ENCODE measurements at regions of chr1 and their contacts with region 1.

Region 1: GRCh38 chr1:229258031-229258756 is 12.7 kb upstream of the RAB4A start:
- DNase-seq: no peak
- H3K4me3 ChIP-seq: no peak overlapping the region
- CTCF ChIP-seq: peak; percentile 64

Region 2: GRCh38 chr1:229244091-229244490 is 14.1 kb before region 1 on chr1:
- CTCF ChIA-PET with region 1: no interaction called
- POLR2A ChIA-PET with region 1: no interaction called
- DNase-seq: no peak
- H3K4me3 ChIP-seq: no peak overlapping the region
- CTCF ChIP-seq: no peak

Region 3: DNA sequence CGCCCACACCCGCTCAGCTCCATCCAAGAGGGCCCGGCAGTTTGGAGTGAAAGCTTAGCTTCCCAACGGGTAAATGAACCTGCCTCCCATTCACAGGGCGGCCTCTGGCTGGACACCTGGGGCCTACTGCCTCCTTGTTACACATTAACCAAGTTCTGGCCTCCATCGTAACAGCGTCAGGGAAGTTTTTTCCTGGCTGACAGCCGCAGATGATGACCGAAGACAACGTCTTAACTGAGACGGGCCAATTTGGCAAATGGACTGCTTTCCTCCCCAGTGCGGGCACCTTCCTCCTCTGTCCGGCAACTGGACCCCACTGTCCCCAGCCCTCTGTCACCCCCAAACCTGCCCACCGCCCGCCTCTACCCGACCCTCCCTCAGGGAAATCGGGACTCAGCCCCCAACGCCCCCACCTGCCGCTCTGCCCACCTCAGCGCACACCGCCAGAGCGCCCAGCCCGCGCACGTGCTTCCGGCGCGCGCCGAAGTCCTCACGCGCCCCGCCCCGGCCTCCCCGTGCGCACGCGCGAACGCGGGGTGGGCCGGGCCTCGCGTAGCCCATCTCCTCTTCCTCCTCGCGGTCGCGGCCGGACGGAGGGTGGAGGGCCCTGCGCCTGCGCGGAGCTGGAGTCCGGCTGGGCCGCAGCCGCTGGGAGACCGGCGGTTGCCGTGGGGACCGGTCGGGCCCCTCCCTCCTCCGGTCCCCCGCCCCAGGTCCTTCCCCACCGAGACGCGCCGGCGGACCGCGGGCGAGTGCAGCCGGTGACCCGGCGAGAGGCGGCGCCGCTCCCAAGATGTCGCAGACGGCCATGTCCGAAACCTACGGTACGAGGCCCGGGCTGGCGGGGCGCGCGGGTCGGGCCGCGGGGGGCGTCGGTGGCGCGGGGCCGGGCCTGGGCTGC is 12.6 kb after region 1 on chr1 and contains the start of gene RAB4A:
- CTCF ChIA-PET with region 1: interaction called, 67 read pairs
- POLR2A ChIA-PET with region 1: no interaction called
- DNase-seq: no peak
- H3K4me3 ChIP-seq: peak within 1 kb of the TSS; percentile 70
- CTCF ChIP-seq: no peak

Region 4: DNA sequence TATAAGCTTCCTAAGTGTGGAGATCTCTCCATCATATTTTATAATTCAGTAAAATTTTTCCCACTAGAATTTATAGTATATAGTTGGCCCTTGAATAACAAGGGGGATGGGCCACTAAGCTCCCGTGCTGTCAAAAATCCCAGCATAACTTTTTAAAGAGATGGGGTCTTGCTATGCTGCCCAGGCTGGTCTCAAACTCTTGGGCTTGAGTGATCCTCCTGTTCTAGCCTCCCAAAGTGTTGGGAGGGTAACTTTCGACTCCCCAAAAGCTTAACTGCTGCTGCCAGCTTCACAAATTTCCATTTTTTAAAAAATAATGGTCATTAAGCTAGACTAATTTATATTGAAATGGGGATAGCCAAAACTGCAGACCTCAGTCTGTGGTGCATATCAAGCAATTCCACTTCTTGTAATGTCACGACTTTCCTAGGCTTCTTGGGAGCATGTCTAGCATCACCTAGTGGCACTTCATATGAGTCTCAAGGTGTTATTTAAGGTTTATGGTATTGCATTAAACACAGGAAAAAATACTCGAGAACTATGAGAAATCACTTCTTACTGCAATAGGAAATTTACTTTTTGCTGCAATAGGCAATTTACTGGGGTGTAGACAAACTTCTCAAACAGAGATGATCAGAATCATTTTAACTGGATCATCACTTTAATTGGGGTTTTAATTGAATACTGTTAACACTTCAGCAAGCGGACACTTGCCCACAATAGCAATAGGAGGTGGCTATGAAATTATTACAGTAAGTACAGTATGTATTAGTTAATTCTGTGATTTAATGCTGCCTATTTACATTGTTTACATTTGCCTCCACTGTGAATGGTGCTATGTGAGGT is 195.0 kb after region 1 on chr1:
- CTCF ChIA-PET with region 1: interaction called, 93 read pairs
- POLR2A ChIA-PET with region 1: no interaction called
- DNase-seq: no peak
- H3K4me3 ChIP-seq: no peak overlapping the region
- CTCF ChIP-seq: peak; percentile 59

Region 5: DNA sequence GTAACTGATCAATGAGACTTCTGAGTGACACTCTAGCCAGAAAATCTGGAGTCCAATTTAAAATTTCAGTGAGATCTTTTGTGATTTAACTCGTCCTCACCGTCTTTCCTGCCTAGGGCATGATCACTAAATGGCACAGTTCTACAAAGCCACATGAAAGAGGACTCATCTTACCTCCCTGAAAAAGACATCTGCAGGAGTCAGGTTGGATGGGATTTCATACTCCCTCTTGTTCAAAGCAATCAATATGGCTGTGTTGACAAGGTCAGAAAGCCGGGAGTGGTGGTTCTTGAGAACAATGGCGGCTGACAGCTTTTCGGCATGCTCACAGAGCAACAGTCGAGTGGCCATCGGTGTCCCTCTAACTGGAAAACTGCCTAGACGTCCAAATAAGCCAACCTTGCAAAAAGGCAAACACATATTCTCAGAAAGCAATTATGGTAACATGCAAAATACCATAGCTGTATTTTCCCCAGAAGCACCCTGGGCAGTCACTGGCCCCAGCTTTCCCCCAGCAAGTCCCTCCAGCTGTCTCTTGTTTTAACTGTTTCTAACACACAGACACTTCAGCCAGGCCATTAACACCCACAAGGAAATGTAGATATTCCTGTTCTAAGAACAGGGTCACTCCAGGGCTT is 212.3 kb after region 1 on chr1:
- CTCF ChIA-PET with region 1: interaction called, 24 read pairs
- POLR2A ChIA-PET with region 1: no interaction called
- DNase-seq: no peak
- H3K4me3 ChIP-seq: no peak overlapping the region
- CTCF ChIP-seq: no peak

Region 6: GRCh38 chr1:229514578-229515275 is 256.5 kb after region 1 on chr1:
- CTCF ChIA-PET with region 1: interaction called, 45 read pairs
- POLR2A ChIA-PET with region 1: no interaction called
- DNase-seq: peak; percentile 47
- H3K4me3 ChIP-seq: no peak overlapping the region
- CTCF ChIP-seq: peak; percentile 83